PC-9 (cell line): ENCODE measurements at regions of chr1 and their contacts with region 1.

Region 1: GRCh38 chr1:179954493-179955297 is at the start of gene CEP350:
- DNase-seq: peak; percentile 94 to 96
- H3K4me3 ChIP-seq: peak within 1 kb of the TSS; percentile 65
- H3K27ac ChIP-seq: peak within 1 kb of the TSS; percentile 63
- H3K4me1 ChIP-seq: peaks cover 25% of the 10 kb centered on the region
- H3K27me3 ChIP-seq: no peaks in the 10 kb centered on the region
- CTCF ChIP-seq: no peak
- total RNA-seq, gene CEP350: 27.0 and 30.6 TPM in 2 replicates

Region 2: GRCh38 chr1:179754042-179754624 is 200.6 kb before region 1 on chr1:
- CTCF ChIA-PET with region 1: no interaction called
- POLR2A ChIA-PET with region 1: no interaction called
- intact Hi-C with region 1: no loop called
- DNase-seq: no peak
- H3K4me3 ChIP-seq: no peak overlapping the region
- H3K27ac ChIP-seq: no peak overlapping the region
- H3K4me1 ChIP-seq: no peaks in the 10 kb centered on the region
- H3K27me3 ChIP-seq: no peaks in the 10 kb centered on the region
- CTCF ChIP-seq: no peak

Region 3: GRCh38 chr1:179882243-179883039 is 72.3 kb before region 1 on chr1 and contains the start of gene TOR1AIP1:
- CTCF ChIA-PET with region 1: no interaction called
- POLR2A ChIA-PET with region 1: no interaction called
- intact Hi-C with region 1: loop called (anchors 1 kb)
- DNase-seq: peak; percentile 89 to 96
- H3K4me3 ChIP-seq: peak within 1 kb of the TSS; percentile 92
- H3K27ac ChIP-seq: peak within 1 kb of the TSS; percentile 90
- H3K4me1 ChIP-seq: peaks cover 21% of the 10 kb centered on the region
- H3K27me3 ChIP-seq: no peaks in the 10 kb centered on the region
- CTCF ChIP-seq: peak; percentile 50
- total RNA-seq, gene TOR1AIP1: 23.5 and 24.4 TPM in 2 replicates

Region 4: DNA sequence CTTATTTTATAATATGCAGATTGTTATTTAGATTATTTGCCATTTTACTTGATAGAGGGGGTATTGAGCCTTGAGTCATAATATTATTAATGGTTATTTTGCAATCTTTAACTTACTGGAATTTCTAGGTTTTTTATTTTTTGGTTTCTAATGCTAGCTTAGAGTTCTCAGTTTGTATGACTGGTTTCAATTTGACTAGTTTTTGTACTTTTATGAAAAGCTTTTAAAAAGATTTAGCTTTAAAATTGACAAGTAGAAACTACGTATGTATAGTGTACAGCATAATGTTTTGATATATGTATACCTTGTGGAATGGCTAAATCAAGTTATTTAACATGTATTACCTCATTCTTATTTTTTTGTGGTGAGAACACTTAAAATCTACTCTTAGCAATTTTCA is 41.4 kb after region 1 on chr1:
- CTCF ChIA-PET with region 1: no interaction called
- POLR2A ChIA-PET with region 1: no interaction called
- intact Hi-C with region 1: loop called (anchors 1 kb)
- DNase-seq: no peak
- H3K4me3 ChIP-seq: no peak overlapping the region
- H3K27ac ChIP-seq: no peak overlapping the region
- H3K4me1 ChIP-seq: no peaks in the 10 kb centered on the region
- H3K27me3 ChIP-seq: no peaks in the 10 kb centered on the region
- CTCF ChIP-seq: no peak

Region 5: DNA sequence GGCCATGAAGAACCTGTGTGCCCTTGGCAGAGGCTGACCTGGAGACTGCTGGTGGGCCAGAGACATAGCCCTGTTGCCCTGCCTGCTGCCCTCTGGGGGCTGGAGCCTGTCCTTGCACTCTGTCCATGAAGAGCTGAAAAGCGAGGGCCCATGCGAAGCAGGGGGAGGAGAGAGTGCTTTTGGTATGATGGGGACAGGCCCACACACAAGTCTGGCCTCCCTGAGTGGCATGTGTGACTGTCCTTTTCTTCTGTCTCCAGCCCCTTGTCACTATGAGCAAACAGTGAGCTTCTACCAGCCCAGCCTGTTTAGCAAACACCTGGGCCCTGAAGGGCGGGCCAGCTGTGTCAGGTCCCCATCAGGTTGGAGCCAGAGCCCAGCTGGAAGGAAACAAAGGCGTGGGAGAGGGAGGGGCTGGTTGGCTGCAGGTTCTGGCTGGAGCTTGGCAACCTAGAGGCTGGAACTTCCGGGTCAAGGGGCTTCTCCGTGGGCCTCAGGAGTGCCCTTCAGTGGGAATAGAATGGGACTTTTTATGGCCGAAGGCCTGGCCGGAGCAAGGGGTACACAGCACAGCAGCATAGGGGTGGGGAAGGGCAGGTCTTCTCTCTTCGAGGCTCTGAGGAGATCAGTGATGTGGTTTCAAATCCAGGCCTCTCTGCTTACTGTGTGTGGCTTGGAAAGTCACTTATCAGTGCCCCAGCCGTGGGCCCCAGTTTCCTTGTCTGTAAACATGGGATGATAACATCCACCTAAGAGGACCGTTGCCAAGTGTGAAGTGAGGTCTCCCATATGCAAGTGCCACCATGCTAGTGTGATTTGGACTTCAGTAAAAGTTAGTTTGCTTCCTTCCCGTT is 214.3 kb after region 1 on chr1:
- CTCF ChIA-PET with region 1: no interaction called
- POLR2A ChIA-PET with region 1: no interaction called
- intact Hi-C with region 1: loop called (anchors 1 kb)
- DNase-seq: peak; percentile 53 to 68
- H3K4me3 ChIP-seq: no peak overlapping the region; the same call in 1 of the 2 replicates
- H3K27ac ChIP-seq: peak overlapping the region; percentile 73
- H3K4me1 ChIP-seq: peaks cover 69% of the 10 kb centered on the region
- H3K27me3 ChIP-seq: no peaks in the 10 kb centered on the region
- CTCF ChIP-seq: peak; percentile 67

Region 6: GRCh38 chr1:180178511-180179161 is 223.9 kb after region 1 on chr1:
- CTCF ChIA-PET with region 1: no interaction called
- POLR2A ChIA-PET with region 1: no interaction called
- intact Hi-C with region 1: loop called (anchors 1 kb)
- DNase-seq: peak in 1 of 2 experiments; percentile 61
- H3K4me3 ChIP-seq: no peak overlapping the region
- H3K27ac ChIP-seq: no peak overlapping the region
- H3K4me1 ChIP-seq: no peaks in the 10 kb centered on the region
- H3K27me3 ChIP-seq: no peaks in the 10 kb centered on the region
- CTCF ChIP-seq: peak; percentile 99